ENCODE measurements at regions of chr13 and their contacts with region 1.

Region 1: DNA sequence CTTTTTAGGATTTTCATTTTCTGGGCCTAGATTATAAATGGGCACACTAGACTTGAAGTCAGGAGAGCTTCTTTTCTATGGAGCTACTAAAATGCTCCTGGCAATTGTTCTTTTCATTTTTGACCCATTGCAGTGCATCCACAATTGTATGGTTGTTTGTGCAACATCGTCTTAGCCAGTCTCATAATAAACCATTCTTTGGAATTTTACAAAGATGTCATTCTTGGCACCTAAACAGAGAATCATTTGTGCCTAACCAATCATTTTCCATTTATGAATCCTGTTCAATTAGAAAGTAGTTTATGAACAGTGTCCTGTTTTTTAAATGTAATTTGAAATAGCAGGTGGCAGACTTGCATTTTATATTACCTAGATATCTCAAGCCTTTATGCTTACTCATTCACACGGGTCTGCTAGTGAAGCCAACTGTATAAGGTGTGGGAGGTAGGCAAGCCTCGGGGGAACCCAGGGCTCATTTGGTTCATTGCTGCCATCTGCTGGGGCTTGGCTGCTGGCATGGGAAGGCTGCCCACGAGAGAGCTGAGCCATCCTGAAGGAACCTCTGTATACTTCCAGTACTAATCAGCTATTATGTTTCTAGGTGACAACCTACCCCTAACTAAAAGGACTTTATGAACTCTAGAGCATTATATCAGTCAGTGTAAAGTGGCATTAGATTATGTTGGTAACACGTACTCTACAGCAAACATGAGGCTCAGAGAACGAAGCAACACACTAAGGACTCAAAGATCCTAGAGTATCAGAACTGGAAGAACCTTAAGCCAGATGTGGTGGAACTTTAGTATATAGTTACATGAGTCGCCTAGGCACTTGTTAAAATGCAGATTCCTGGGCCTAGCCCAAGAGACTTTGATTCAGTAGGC is 60.0 kb downstream of the TPT1 start:
- DNase-seq: peak; percentile 47 to 72 (median 62)
- ATAC-seq: peak; percentile 90 to 98 (median 95)
- H3K4me3 ChIP-seq: no peak overlapping the region
- H3K27ac ChIP-seq: no peak overlapping the region
- H3K4me1 ChIP-seq: peaks cover 0 to 10% (median 3%) of the 10 kb centered on the region in 12 donors
- H3K27me3 ChIP-seq: no peaks in the 10 kb centered on the region
- CTCF ChIP-seq: peak; percentile 49 to 78 (median 66)
- POLR2A ChIP-seq: no peak

Region 2: DNA sequence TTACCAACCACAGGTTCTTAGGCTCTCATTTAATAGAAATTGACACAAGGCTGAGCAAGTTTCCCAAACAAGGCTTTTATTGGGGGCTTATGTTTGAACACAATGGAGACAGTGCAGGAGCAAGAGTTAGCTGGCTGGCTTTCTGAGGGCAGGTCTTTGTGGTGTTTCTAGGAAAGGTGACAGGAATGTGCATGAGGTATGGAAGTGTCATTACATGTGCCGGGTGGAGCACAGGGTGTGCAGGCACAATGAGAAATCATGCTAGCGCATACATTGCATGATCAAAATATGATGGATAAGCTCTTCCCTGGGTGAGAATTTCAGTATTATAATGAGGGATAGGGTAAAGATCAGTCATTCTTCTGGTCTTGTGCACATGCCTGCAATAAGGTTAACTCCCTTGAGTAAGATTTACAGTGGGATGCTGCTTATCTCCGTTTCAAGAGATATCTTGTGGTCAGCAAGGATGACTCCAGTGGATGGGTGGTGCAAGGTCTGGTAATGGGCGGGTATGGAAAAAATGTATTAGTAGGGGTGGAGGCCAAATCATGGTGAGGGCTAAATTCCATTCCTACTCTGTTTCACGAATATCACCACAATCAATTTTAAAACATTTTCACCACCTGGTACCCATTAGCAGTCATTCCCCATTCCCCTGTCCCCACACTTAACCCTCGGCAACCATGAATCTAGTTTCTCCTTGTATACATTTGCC is 1442.2 kb before region 1 on chr13:
- intact Hi-C with region 1: no loop called
- DNase-seq: no peak
- ATAC-seq: no peak
- H3K4me3 ChIP-seq: no peak overlapping the region
- H3K27ac ChIP-seq: no peak overlapping the region
- H3K4me1 ChIP-seq: no peaks in the 10 kb centered on the region
- H3K27me3 ChIP-seq: no peaks in the 10 kb centered on the region
- CTCF ChIP-seq: no peak
- POLR2A ChIP-seq: no peak

Region 3: GRCh38 chr13:45047394-45048310 is 233.3 kb before region 1 on chr13:
- intact Hi-C with region 1: loop called (anchors 1 to 5 kb)
- DNase-seq: peak; percentile 63 to 73 (median 67)
- ATAC-seq: peak; percentile 73 to 87 (median 80)
- H3K4me3 ChIP-seq: peak overlapping the region in 11 of 12 donors; percentile 22 to 59 (median 50)
- H3K27ac ChIP-seq: peak overlapping the region in 5 of 12 donors; percentile 38 to 66 (median 49)
- H3K4me1 ChIP-seq: peaks cover 0 to 16% (median 3%) of the 10 kb centered on the region in 12 donors
- H3K27me3 ChIP-seq: no peaks in the 10 kb centered on the region
- CTCF ChIP-seq: peak; percentile 75 to 91 (median 85)
- POLR2A ChIP-seq: no peak

Region 4: DNA sequence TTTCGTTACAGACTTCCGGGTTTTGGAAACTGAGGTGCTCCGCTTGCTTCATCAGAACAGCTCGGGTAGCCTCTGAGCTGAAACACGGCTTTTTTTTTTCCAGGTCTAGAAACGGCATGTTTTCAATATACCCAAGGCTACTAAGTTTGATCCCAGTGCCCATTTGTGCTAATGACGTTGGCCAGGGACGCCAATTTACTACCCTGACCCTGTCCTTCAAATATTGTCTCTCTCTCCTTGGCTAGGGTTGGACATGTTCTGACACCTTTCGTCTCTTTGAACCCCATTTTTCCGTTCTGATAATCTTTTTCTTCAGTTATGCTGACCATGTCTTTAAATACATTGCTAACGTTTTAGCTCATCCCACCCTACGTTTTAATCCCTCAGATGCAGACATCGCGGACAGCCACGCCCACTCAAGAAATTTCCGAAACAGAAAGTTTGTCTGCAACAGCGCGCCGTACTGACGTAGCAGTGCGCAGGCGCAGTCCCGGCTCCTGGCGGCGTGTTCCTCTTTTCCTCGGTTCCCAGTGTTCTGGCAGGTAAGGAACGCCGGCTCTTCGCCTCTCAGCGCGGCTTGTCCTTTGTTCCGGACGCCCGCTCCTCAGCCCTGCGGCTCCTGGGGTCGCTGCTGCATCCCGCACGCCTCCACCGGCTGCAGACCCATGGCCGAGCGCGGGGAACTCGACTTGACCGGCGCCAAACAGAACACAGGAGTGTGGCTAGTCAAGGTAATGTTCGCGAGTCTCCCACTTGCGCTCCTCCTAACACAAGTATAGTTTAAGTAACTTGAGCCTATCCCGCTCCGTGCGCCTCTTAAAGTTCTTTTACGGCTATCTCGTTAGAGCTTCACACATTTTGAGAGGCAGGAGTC is 160.8 kb before region 1 on chr13 and contains the start of gene GTF2F2:
- intact Hi-C with region 1: loop called in 1 of 10 experiments (anchors 5 kb)
- DNase-seq: peak; percentile 90 to 95 (median 92)
- ATAC-seq: peak; percentile 94 to 97 (median 95)
- H3K4me3 ChIP-seq: peak within 1 kb of the TSS; percentile 59 to 97 (median 80)
- H3K27ac ChIP-seq: peak within 1 kb of the TSS; percentile 2 to 90 (median 82)
- H3K4me1 ChIP-seq: peaks cover 3 to 26% (median 16%) of the 10 kb centered on the region in 12 donors
- H3K27me3 ChIP-seq: no peaks in the 10 kb centered on the region
- CTCF ChIP-seq: peak in 1 of 12 donors; percentile 14
- POLR2A ChIP-seq: peak in 1 of 2 donors; percentile 50
- total RNA-seq, gene GTF2F2: 17.7 to 25.4 (median 21.6) TPM

Region 5: GRCh38 chr13:45194081-45194939 is 86.7 kb before region 1 on chr13:
- intact Hi-C with region 1: loop called in 2 of 10 experiments (anchors 10 kb)
- DNase-seq: peak in 3 of 5 donors; percentile 38 to 45 (median 40)
- ATAC-seq: peak in 3 of 4 donors; percentile 64 to 89 (median 73)
- H3K4me3 ChIP-seq: peak overlapping the region in 3 of 12 donors; percentile 16 to 25 (median 20)
- H3K27ac ChIP-seq: no peak overlapping the region
- H3K4me1 ChIP-seq: peaks cover 0 to 41% (median 18%) of the 10 kb centered on the region in 12 donors
- H3K27me3 ChIP-seq: no peaks in the 10 kb centered on the region
- CTCF ChIP-seq: peak in 10 of 12 donors; percentile 8 to 68 (median 42)
- POLR2A ChIP-seq: no peak

Region 6: DNA sequence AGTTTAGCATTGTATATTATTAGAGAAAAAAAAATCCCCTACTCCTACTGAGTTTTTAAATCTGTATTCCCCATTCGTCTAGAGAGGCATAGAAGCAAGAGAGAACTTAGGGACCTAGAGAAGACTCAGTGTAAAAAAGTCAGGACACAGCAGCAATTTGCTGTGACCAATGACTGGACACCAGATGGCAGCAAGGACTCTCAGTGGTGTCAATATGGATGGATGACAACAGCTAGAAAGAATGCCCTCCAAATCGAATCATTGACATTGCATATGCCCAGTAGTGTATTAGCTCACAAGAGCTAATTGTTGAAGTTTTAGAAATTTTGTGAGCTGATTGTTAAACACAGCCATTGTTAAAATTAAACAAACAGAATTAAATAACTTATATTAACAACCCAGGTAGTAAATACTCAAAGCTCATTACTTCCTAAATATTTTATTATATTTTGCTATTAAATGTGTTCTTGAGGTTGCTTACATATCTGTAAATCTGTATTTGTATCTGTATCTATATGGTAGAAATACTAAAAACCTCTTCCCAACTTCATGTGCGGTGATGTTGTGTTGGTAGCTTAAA is 526.6 kb after region 1 on chr13:
- intact Hi-C with region 1: no loop called
- DNase-seq: peak in 3 of 5 donors; percentile 27 to 53 (median 47)
- ATAC-seq: peak; percentile 53 to 81 (median 68)
- H3K4me3 ChIP-seq: no peak overlapping the region
- H3K27ac ChIP-seq: no peak overlapping the region
- H3K4me1 ChIP-seq: peaks cover 0 to 5% (median 0%) of the 10 kb centered on the region in 12 donors
- H3K27me3 ChIP-seq: no peaks in the 10 kb centered on the region
- CTCF ChIP-seq: peak; percentile 40 to 71 (median 56)
- POLR2A ChIP-seq: no peak

Measured in heart left ventricle (tissue), 16 donors.